ENCODE measurements at regions of chr10 and their contacts with region 1.

Region 1: GRCh38 chr10:7872041-7872442 is 53.7 kb downstream of the TAF3 start:
- DNase-seq: peak; percentile 47
- H3K4me3 Mint-ChIP-seq: peak overlapping the region; percentile 78
- H3K27ac Mint-ChIP-seq: no peak overlapping the region
- H3K4me1 Mint-ChIP-seq: no peaks in the 10 kb centered on the region
- H3K27me3 Mint-ChIP-seq: no peaks in the 10 kb centered on the region
- CTCF ChIP-seq: peak; percentile 33

Region 2: DNA sequence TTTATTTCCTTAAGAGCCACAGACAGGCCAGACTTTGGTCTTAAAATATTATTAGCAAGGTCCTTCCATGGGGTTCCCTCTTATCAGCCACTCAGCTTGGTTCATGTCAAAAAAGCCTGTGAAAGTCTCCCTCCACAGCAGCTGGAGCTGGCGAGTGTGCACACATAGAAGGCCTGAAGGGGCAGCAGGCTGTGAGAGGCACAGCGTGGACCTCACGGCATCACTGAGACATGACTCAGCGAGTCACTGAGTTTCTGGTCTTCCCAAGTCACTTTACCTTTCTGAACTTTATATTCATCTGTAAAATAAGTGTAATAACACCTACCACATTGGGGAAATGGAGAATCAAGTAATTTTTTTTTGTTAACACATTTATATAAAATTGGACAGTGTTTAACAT is 45.1 kb before region 1 on chr10:
- CTCF ChIA-PET with region 1: no interaction called
- POLR2A ChIA-PET with region 1: no interaction called
- intact Hi-C with region 1: no loop called
- DNase-seq: peak; percentile 35
- H3K4me3 Mint-ChIP-seq: no peak overlapping the region
- H3K27ac Mint-ChIP-seq: peak overlapping the region; percentile 42
- H3K4me1 Mint-ChIP-seq: peaks cover 2% of the 10 kb centered on the region
- H3K27me3 Mint-ChIP-seq: no peaks in the 10 kb centered on the region
- CTCF ChIP-seq: no peak

Region 3: DNA sequence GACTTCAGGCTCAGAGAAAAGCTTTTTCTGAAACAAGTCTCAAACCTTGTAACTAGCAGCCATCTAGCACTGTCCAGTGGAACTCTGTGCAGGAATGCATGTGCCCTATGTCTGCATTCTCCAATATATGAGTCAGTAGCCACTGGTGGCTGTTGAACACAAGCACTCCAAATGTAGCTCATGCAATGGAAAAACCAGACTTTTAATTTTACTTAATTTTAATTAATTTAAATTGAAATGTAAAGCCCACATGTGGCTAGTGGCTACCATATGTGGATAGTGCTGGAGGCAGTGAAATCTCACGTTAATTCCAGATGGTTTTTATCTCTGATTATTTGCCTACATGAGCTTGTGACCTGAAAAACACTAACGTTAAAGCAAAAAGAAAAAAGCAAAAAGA is 407.6 kb after region 1 on chr10:
- CTCF ChIA-PET with region 1: no interaction called
- POLR2A ChIA-PET with region 1: no interaction called
- intact Hi-C with region 1: loop called (anchors 5 kb)
- DNase-seq: peak; percentile 45
- H3K4me3 Mint-ChIP-seq: no peak overlapping the region
- H3K27ac Mint-ChIP-seq: peak overlapping the region; percentile 21
- H3K4me1 Mint-ChIP-seq: peaks cover 6% of the 10 kb centered on the region
- H3K27me3 Mint-ChIP-seq: no peaks in the 10 kb centered on the region
- CTCF ChIP-seq: no peak

Region 4: DNA sequence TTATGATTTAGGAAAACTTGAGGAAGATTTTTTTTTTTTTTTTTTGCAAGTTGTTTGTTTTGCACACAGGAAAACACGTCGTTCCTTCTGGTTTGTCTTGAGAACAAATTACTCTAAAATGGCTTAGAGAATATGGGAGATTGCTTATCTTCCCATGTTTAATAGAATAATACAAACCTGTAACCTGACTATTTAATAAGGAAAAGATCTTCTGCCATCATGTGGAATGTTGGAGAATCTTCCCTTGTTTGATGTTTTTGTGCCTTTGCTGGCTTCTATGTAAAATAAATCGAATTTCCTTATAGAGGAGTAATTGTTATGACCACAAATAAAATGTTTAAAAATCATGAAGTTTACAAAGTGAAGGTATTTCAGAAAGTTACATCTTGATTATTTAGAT is 1001.3 kb after region 1 on chr10:
- CTCF ChIA-PET with region 1: interaction called, 4 read pairs
- POLR2A ChIA-PET with region 1: no interaction called
- intact Hi-C with region 1: loop called (anchors 1 kb)
- DNase-seq: peak; percentile 29
- H3K4me3 Mint-ChIP-seq: no peak overlapping the region
- H3K27ac Mint-ChIP-seq: no peak overlapping the region
- H3K4me1 Mint-ChIP-seq: peaks cover 19% of the 10 kb centered on the region
- H3K27me3 Mint-ChIP-seq: no peaks in the 10 kb centered on the region
- CTCF ChIP-seq: peak; percentile 36

Region 5: GRCh38 chr10:9075422-9075821 is 1203.4 kb after region 1 on chr10:
- CTCF ChIA-PET with region 1: no interaction called
- POLR2A ChIA-PET with region 1: no interaction called
- intact Hi-C with region 1: loop called (anchors 5 kb)
- DNase-seq: no peak
- H3K4me3 Mint-ChIP-seq: no peak overlapping the region
- H3K27ac Mint-ChIP-seq: no peak overlapping the region
- H3K4me1 Mint-ChIP-seq: no peaks in the 10 kb centered on the region
- H3K27me3 Mint-ChIP-seq: no peaks in the 10 kb centered on the region
- CTCF ChIP-seq: peak; percentile 14

Region 6: DNA sequence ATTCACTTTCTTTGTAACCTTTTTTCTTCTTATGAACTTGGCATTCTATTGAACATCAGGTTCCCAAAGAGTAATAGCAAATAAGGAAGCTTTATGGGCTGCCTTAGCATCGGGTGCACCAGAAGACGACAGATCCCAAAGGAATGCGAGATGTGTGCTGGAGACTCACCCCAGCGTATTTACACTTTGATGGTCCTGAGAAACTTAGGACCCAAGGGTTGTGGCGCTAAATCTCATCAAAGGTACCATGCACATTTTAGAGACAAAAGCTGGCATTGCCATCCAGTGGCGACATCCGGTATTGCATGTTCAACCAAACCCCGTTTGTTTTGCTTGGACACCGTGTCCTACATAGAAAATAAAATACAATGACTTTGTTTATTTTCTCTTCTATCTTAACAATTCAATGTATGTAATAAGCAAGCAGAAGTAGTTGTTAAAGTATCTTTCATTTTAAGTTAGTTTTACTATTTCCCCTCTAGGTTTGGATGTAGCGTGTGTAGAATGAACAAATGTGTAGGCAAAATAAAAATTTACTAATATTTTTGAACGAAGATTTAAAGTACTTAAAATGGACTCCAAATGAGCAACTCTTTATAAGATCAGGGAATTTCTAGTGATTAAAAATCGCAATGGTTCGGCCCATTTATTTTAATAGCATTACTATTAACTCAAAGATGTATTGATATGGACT is 1337.2 kb after region 1 on chr10:
- CTCF ChIA-PET with region 1: interaction called, 7 read pairs
- POLR2A ChIA-PET with region 1: no interaction called
- intact Hi-C with region 1: loop called (anchors 1 kb)
- DNase-seq: peak; percentile 71
- H3K4me3 Mint-ChIP-seq: no peak overlapping the region
- H3K27ac Mint-ChIP-seq: peak overlapping the region; percentile 42
- H3K4me1 Mint-ChIP-seq: peaks cover 8% of the 10 kb centered on the region
- H3K27me3 Mint-ChIP-seq: no peaks in the 10 kb centered on the region
- CTCF ChIP-seq: peak; percentile 88

Region 7: GRCh38 chr10:9302120-9302746 is 1430.2 kb after region 1 on chr10:
- CTCF ChIA-PET with region 1: interaction called, 3 read pairs
- POLR2A ChIA-PET with region 1: no interaction called
- intact Hi-C with region 1: loop called (anchors 1 kb)
- DNase-seq: peak; percentile 74
- H3K4me3 Mint-ChIP-seq: no peak overlapping the region
- H3K27ac Mint-ChIP-seq: no peak overlapping the region
- H3K4me1 Mint-ChIP-seq: no peaks in the 10 kb centered on the region
- H3K27me3 Mint-ChIP-seq: no peaks in the 10 kb centered on the region
- CTCF ChIP-seq: peak; percentile 38